ENCODE measurements at regions of chr1 and their contacts with region 1.

Region 1: DNA sequence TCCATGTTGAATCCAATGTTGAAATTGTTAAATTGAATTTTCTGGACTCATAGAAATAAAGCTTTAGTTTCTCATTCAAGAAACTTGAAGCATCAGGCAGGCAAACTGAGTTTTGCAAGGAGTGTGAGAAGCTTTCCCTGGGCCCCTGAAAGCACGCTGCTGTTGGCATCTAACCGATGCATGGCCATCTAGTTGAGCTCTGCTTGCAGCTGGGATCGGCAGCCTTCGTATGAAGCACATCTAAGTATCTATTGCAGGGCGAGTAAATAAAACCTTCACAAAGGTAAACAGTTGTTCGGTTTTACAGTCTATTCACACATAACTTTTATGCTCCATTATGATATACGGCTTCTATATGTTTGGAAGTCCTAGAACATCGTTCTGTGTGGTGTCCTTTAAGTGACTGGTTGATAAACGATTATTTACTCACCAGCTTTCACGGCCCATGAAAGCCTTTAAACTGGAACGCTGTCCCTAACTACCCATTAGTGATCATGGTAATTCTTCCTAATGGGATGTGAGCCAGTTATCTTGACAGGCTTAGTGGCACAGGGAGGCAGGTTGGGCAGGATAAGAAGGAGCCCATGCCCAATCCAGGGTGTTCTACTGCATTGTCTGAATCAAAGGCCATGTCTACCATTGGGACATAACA is 71.7 kb downstream of the SEC16B start:
- DNase-seq: no peak
- H3K4me3 ChIP-seq: no peak overlapping the region
- H3K4me3 Mint-ChIP-seq: no peak overlapping the region
- H3K27ac Mint-ChIP-seq: no peak overlapping the region
- H3K4me1 ChIP-seq: peaks cover 8% of the 10 kb centered on the region; the same call in 1 of the 2 replicates
- H3K4me1 Mint-ChIP-seq: peaks cover 7% of the 10 kb centered on the region
- H3K27me3 ChIP-seq: no peaks in the 10 kb centered on the region
- H3K27me3 Mint-ChIP-seq: no peaks in the 10 kb centered on the region
- CTCF ChIP-seq: no peak

Region 2: DNA sequence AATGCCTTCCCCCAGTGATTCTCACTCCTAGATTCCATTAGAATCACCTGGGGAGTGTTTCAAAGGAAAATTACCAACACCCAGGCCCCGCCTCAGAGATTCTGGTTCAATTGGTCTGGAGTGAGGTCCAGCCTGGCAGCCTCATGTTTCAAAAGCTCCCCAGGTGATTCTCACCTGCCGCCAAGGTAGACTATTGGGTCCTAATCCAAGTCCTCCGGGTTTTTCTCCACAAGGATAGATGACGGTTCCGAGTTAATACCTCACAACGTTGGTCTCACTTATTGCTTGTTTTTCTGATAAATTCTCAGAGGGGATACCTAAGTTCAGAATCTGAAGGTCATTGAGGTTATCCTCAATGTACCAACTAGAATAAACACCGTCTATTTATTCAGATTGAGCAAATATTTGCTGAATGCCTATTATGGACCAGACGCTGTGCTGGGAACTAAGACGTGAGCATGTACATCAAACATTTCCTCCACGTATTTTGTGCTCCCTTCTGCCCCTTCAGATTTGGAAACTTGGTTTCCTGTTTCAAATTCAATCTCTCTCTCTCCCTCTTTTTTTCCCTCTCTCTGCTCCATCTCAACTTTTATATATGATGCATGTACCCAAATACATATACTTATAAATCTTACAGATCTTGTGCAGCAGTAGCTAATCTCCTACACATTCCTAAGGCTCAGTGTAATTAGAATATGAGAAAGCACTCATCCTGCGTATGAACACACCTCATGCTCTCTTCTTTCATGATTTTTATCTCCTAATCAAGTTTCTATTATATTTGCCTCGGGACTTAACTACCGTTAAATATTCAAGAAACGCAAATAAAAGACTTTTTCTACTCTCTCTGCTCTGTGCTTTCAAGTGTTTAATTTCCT is 25.6 kb before region 1 on chr1:
- CTCF ChIA-PET with region 1: no interaction called
- POLR2A ChIA-PET with region 1: no interaction called
- intact Hi-C with region 1: loop called (anchors 1 kb)
- DNase-seq: peak; percentile 54 to 57
- H3K4me3 ChIP-seq: no peak overlapping the region
- H3K4me3 Mint-ChIP-seq: peak overlapping the region; percentile 56
- H3K27ac Mint-ChIP-seq: peak overlapping the region; percentile 54
- H3K4me1 ChIP-seq: peaks cover 28% of the 10 kb centered on the region
- H3K4me1 Mint-ChIP-seq: peaks cover 20% of the 10 kb centered on the region
- H3K27me3 ChIP-seq: no peaks in the 10 kb centered on the region
- H3K27me3 Mint-ChIP-seq: no peaks in the 10 kb centered on the region
- CTCF ChIP-seq: no peak